ENCODE measurements at regions of chr17 and their contacts with region 1.

Region 1: DNA sequence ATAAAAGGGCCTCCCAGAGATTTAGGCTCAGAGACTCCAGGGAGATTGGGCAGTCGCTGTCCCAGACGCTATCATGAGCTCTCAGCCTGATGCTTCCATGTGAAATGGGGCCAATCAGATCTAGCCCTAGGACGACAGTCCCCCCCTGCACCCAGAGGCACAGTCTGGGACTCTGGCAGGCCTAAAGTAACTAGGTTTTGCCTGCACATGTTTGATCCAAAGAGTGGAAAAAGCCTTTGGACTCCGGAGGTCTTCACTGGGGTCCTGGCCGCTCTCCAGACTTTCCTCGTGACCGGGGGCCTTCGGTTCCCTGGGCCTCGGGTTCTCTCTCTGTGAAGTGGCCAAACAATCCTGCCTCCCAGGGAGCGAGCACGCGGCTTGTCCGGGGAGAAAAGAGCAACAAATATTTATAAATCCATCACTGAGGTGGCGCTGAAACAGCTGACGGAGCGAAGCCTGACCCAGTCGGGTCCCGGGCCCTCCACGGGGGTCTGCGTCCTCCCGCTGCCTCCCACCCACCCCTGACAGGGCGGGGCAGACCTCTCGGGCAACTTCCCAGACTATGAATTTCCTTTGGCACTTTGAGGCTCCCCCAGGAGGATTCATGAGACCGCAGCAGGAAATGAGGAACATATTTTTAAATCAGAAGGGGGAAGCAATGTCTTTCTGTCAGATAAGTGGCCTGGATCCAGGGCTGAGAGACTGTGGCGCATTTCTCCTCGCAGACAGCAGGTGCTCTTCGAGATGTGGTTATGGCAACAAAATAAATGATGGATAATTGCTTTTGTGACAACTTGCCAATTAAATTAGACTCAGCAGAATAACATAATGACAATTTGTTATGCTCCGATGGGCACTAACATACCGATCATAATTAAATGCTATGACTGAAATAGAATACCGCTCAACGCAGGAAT is 38.9 kb downstream of the MRPS23 start:
- DNase-seq: no peak

Region 2: DNA sequence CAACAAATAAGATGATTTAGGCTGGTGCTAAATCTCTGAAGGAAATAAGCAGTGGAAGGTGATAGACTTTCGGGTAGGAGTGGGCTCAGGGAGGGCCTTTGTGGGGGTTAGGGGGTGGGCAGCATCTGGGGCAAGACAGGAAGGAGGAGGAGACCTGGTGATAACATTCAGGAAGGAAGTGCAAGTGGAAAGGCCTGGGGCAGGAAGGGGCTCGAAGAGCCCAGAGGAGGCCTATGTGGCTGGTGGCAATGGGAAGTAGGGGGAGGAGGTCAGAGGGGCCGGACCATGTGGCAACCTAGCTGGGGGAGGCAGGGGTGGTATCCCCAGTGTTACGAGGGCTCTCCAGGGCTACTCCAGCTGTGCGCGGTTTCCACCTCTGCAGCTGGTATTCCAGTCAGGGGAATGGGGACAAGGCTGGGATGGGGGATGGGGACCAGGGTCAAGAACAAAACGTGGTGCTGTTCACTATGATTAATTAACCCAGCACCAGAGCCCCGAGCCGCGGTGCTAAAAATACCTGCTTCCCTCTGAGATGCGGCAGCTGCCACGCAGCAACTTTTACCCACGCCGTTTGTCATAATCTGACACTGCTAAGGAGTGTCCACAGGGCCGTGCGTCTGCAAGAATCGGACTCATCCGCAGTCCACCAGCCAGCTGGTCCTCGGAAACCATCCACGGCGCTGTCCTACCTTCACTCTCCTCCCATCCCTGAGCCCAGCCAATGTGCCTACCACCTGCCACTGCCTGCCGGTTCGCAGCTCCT is 60.7 kb before region 1 on chr17:
- intact Hi-C with region 1: no loop called
- DNase-seq: no peak

Region 3: GRCh38 chr17:57785022-57785421 is 26.0 kb before region 1 on chr17:
- intact Hi-C with region 1: loop called in 1 of 2 experiments (anchors 2 kb)
- DNase-seq: no peak

Measured in posterior vena cava (tissue), 2 donors.